Activated CD4-positive, alpha-beta memory T cell treated with anti-CD3 and anti-CD28 coated beads for 36 hours (primary cell): ENCODE measurements at regions of chr12 and their contacts with region 1.

Region 1: GRCh38 chr12:76348079-76348901 is at the start of gene BBS10:
- DNase-seq: peak; percentile 93
- H3K4me3 Mint-ChIP-seq: peak within 1 kb of the TSS; percentile 91
- H3K27ac Mint-ChIP-seq: peak within 1 kb of the TSS; percentile 90
- H3K4me1 Mint-ChIP-seq: peaks cover 25% of the 10 kb centered on the region
- H3K27me3 Mint-ChIP-seq: no peaks in the 10 kb centered on the region
- total RNA-seq, gene BBS10: 3.2 to 3.4 TPM

Region 2: GRCh38 chr12:74537707-74538385 is 1810.4 kb before region 1 on chr12 and contains the start of gene ATXN7L3B:
- CTCF ChIA-PET with region 1: no interaction called
- POLR2A ChIA-PET with region 1: no interaction called
- intact Hi-C with region 1: loop called (anchors 5 kb)
- DNase-seq: peak; percentile 97
- H3K4me3 Mint-ChIP-seq: peak within 1 kb of the TSS; percentile 92
- H3K27ac Mint-ChIP-seq: peak within 1 kb of the TSS; percentile 94
- H3K4me1 Mint-ChIP-seq: peaks cover 48% of the 10 kb centered on the region
- H3K27me3 Mint-ChIP-seq: no peaks in the 10 kb centered on the region
- total RNA-seq, gene ATXN7L3B: 16.7 to 17.0 TPM

Region 3: DNA sequence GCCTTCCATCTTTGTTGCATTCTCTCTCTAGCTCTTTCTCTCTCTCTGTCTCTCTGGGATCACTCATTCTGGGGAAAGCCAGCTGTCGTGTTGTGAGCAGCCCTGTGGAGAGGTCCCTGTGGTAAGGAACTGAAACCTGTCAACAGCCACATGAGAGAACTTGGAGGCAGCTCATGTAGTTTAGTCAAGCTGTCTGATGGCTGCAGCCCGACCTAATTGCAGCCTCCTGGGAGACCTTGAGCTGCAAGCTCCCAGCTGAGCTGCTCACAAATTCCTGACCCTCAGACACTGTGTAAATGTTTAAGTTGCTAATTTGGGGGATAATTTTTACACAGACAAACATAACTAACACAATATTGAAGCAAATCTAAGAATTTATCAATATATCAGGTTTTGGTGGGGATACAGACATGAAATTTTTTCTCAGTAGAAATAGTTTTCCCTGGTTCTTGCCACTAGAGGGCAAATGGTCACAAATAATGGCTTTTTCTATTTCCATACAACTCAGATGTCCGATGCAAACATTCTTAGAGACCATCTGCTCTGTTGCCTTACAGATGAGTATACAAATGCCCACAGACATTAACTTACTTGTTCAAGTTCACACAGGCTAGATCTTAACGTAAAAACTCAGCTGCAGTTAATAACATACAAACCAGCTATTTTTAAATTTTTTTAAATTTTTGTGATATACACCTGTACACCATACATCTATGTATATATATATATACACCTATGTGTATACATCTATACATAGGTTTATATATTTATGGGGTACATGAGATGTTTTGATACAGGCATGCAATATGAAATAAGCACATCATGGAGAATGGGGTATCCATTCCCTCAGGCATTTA is 821.4 kb before region 1 on chr12:
- CTCF ChIA-PET with region 1: no interaction called
- POLR2A ChIA-PET with region 1: no interaction called
- intact Hi-C with region 1: loop called (anchors 2 kb)
- DNase-seq: peak; percentile 21
- H3K4me3 Mint-ChIP-seq: no peak overlapping the region
- H3K27ac Mint-ChIP-seq: no peak overlapping the region
- H3K4me1 Mint-ChIP-seq: peaks cover 6% of the 10 kb centered on the region
- H3K27me3 Mint-ChIP-seq: peaks cover 19% of the 10 kb centered on the region

Region 4: GRCh38 chr12:76083904-76084862 is 264.1 kb before region 1 on chr12 and contains the start of gene NAP1L1:
- CTCF ChIA-PET with region 1: interaction called, 11 read pairs
- POLR2A ChIA-PET with region 1: interaction called, 4 read pairs
- intact Hi-C with region 1: loop called (anchors 1 kb)
- DNase-seq: peak; percentile 98
- H3K4me3 Mint-ChIP-seq: peak within 1 kb of the TSS; percentile 93
- H3K27ac Mint-ChIP-seq: peak within 1 kb of the TSS; percentile 99
- H3K4me1 Mint-ChIP-seq: peaks cover 42% of the 10 kb centered on the region
- H3K27me3 Mint-ChIP-seq: no peaks in the 10 kb centered on the region
- total RNA-seq, gene NAP1L1: 889 to 895 TPM

Region 5: GRCh38 chr12:76274420-76275083 is 73.7 kb before region 1 on chr12:
- CTCF ChIA-PET with region 1: interaction called, 4 read pairs
- POLR2A ChIA-PET with region 1: no interaction called
- intact Hi-C with region 1: loop called (anchors 1 kb)
- DNase-seq: peak; percentile 59
- H3K4me3 Mint-ChIP-seq: no peak overlapping the region
- H3K27ac Mint-ChIP-seq: no peak overlapping the region
- H3K4me1 Mint-ChIP-seq: peaks cover 12% of the 10 kb centered on the region
- H3K27me3 Mint-ChIP-seq: peaks cover 14% of the 10 kb centered on the region

Region 6: GRCh38 chr12:76455582-76456345 is 107.5 kb after region 1 on chr12:
- CTCF ChIA-PET with region 1: interaction called, 10 read pairs
- POLR2A ChIA-PET with region 1: no interaction called
- intact Hi-C with region 1: loop called (anchors 1 kb)
- DNase-seq: peak; percentile 24
- H3K4me3 Mint-ChIP-seq: no peak overlapping the region
- H3K27ac Mint-ChIP-seq: no peak overlapping the region
- H3K4me1 Mint-ChIP-seq: peaks cover 20% of the 10 kb centered on the region
- H3K27me3 Mint-ChIP-seq: no peaks in the 10 kb centered on the region

Region 7: GRCh38 chr12:76763743-76764675 is 415.7 kb after region 1 on chr12 and contains the start of gene ZDHHC17:
- CTCF ChIA-PET with region 1: no interaction called
- POLR2A ChIA-PET with region 1: no interaction called
- intact Hi-C with region 1: loop called (anchors 10 kb)
- DNase-seq: peak; percentile 93
- H3K4me3 Mint-ChIP-seq: peak within 1 kb of the TSS; percentile 99
- H3K27ac Mint-ChIP-seq: peak within 1 kb of the TSS; percentile 93
- H3K4me1 Mint-ChIP-seq: peaks cover 34% of the 10 kb centered on the region
- H3K27me3 Mint-ChIP-seq: no peaks in the 10 kb centered on the region
- total RNA-seq, gene ZDHHC17: 18.8 to 20.0 TPM